Activated CD4-positive, alpha-beta T cell treated with anti-CD3 and anti-CD28 coated beads for 36 hours (primary cell): ENCODE measurements at regions of chr6 and their contacts with region 1.

Region 1: GRCh38 chr6:3732345-3733141 is 19.0 kb downstream of the PXDC1 start:
- DNase-seq: peak; percentile 80
- ATAC-seq: peak; percentile 83
- H3K4me3 Mint-ChIP-seq: no peak overlapping the region
- H3K27ac Mint-ChIP-seq: no peak overlapping the region
- H3K4me1 Mint-ChIP-seq: no peaks in the 10 kb centered on the region
- H3K27me3 Mint-ChIP-seq: peaks cover 12% of the 10 kb centered on the region

Region 2: DNA sequence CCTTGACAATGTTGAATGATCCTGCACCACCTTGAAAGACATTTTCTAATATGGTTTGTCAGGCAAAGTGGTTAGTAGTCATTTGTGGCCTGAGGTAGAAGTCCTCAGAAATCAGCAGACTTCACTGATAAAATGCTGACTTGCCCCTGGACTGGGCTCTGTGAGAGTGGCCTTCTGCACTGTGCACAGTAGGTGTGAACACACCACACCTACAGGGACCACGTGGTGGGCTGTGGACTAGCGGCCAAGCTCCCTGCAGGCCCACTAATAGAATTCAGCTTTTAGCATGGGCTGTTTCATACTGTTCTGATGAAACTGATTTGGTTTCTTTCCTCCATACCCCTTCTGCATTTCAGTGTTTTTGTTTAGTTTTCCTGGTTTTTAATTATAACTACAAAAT is 606.7 kb before region 1 on chr6:
- CTCF ChIA-PET with region 1: no interaction called
- POLR2A ChIA-PET with region 1: no interaction called
- intact Hi-C with region 1: loop called (anchors 1 to 10 kb)
- DNase-seq: no peak
- ATAC-seq: no peak
- H3K4me3 Mint-ChIP-seq: no peak overlapping the region
- H3K27ac Mint-ChIP-seq: no peak overlapping the region
- H3K4me1 Mint-ChIP-seq: peaks cover 10% of the 10 kb centered on the region
- H3K27me3 Mint-ChIP-seq: no peaks in the 10 kb centered on the region

Region 3: DNA sequence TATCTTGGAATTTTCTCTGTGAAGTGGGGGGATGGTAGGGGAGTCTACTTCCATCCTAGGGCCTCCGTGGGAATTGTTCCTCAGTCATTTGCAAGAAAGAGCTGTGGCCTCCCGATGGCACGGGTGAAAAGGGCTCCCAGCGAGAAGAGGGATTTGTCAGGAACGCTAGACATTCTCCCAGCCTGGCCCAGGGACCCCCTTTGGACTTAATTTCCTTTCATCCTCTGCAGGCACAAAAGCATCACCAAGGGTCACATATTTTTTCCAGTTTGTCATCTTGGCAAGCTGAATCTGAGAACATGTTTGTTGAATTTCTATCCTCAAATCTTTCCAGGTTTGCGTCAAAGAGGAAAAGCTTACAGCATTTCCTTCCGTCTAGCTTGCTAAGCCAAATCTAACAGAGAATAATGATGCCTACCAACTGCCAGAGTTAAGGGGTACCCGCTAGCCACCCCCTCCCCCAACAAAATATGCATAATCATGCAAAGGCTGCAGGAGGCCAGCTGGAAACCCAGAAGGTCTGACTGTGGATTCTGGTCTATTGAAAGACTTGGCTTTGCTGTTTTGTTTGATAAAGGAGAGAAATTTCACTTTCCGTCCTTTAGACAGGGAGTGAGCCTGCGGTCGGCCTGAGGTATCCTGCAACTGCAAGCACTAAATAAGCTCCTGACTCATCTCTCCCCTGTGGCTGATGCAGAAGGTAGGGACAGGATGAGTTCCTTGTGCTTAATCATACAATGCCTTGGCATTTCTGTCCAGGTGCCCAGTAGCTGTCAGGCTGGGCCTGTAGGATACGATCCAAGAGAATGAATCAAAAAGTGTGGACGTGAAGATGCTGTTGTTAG is 450.7 kb before region 1 on chr6:
- CTCF ChIA-PET with region 1: interaction called, 73 read pairs
- POLR2A ChIA-PET with region 1: no interaction called
- intact Hi-C with region 1: loop called (anchors 1 kb)
- DNase-seq: no peak
- ATAC-seq: no peak
- H3K4me3 Mint-ChIP-seq: no peak overlapping the region
- H3K27ac Mint-ChIP-seq: no peak overlapping the region
- H3K4me1 Mint-ChIP-seq: peaks cover 3% of the 10 kb centered on the region
- H3K27me3 Mint-ChIP-seq: no peaks in the 10 kb centered on the region

Region 4: DNA sequence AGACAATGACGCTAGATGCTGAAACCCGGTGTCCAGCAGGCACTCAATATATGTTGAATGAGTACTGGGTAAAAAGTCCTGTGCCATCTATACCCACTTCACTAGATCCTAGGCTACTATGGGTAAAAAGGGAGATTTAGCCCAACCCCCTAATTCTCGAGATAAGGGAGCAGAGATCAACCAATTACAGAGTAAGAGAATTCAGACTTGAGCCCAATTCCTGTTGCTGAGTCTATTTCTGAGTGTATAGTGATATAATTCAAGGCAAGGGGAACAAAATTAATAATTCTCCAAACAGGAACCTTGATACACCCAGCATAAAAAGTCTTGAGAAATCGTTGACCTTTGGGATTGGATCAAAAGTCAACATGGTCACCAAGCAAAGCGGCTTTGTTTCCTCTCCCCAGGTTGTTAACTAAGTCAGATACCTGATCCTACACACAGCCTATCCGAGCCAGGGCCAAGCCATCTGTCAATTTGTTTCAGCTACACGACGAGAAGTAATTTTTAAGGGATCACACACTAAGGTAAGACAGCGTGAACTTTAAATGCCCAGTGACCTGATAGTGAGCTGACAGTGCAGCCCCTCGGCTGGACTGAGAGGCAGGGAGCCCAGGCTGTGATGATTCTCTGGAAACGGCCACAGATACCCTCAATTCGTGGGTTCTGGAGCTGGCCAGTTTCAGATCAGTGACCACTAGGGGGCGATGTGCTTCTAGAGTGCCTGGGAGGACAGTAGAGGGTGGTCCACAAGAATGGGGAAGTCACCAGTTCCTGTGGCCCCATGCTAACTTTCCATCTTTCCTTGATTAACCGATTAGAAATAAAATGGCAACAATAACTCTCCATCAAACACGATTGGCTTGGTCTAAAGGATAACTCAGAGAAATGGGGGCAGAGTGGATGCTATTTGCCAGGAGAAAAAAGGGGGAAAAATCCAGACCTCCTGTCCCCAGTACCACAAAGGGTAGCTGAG is 321.9 kb before region 1 on chr6:
- CTCF ChIA-PET with region 1: interaction called, 4 read pairs
- POLR2A ChIA-PET with region 1: no interaction called
- intact Hi-C with region 1: loop called (anchors 1 to 5 kb)
- DNase-seq: peak; percentile 79
- ATAC-seq: no peak
- H3K4me3 Mint-ChIP-seq: no peak overlapping the region
- H3K27ac Mint-ChIP-seq: no peak overlapping the region
- H3K4me1 Mint-ChIP-seq: peaks cover 12% of the 10 kb centered on the region
- H3K27me3 Mint-ChIP-seq: no peaks in the 10 kb centered on the region

Region 5: GRCh38 chr6:3977875-3978711 is 245.6 kb after region 1 on chr6:
- CTCF ChIA-PET with region 1: interaction called, 13 read pairs
- POLR2A ChIA-PET with region 1: no interaction called
- intact Hi-C with region 1: no loop called
- DNase-seq: peak; percentile 68
- ATAC-seq: peak; percentile 99
- H3K4me3 Mint-ChIP-seq: no peak overlapping the region
- H3K27ac Mint-ChIP-seq: no peak overlapping the region
- H3K4me1 Mint-ChIP-seq: peaks cover 11% of the 10 kb centered on the region
- H3K27me3 Mint-ChIP-seq: peaks cover 2% of the 10 kb centered on the region